Sciatic nerve (tissue), 2 donors: ENCODE measurements at regions of chr17 and their contacts with region 1.

Region 1: DNA sequence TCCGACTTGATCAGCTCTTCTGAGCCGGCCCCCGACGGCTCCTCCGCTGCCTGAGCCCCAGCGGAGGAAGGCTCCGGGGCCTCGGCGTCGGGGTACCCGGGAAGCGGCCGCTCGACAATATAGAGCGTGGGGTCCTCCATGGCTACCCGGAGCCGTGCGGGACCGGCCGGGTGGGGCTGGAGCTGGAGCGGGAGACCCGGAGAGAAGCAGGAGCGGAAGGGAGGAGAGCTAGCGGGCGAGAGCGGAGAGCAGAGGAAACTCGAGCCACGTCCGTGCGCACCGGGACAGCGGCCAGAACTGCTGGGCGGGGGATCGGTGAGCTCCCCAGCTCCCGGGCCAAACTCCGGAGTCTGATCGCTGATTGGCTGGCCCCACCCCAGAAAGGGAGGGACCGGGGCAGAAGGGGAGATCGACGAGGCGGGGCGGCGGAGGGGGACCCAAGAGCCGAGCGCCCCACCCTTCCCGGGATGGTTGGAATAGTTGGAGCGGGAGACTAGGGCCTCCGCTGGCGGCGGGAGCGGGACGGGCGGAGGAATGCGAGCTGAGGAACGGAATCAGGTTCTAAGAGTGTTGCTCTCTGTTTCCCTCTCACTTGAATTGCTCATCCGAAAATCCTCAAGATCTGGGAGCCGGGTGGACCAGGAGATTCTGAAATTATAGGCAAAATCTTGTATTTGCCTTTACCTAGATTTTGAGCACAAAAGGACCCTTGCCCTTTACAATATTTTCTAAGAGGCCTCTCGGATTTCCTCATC is at the start of gene CAVIN1:
- DNase-seq: peak; percentile 100
- ATAC-seq: peak; percentile 97
- total RNA-seq, gene CAVIN1: 608 TPM

Region 2: DNA sequence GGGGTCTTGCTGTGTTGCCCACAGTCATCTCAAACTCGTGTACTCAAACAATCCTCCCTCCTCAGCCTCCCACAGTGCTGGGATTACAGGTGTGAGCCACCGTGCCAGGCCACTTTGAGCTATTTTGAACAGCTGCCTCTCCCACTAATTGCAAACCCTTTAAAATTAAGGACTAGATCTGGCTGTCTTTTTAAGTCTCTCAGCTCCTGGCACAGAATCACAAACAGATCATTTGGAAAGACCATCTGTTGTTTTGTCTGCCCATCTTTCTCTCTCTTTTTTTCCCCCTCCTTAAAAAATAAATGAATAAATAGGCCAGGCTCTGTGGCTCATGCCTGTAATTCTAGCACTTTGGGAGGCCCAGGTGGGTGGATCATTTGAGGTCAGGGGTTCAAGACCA is 24.0 kb before region 1 on chr17:
- intact Hi-C with region 1: no loop called
- DNase-seq: no peak
- ATAC-seq: no peak

Region 3: GRCh38 chr17:42459256-42459800 is 36.2 kb after region 1 on chr17:
- intact Hi-C with region 1: loop called (anchors 5 kb)
- DNase-seq: peak; percentile 72
- ATAC-seq: peak; percentile 59

Region 4: DNA sequence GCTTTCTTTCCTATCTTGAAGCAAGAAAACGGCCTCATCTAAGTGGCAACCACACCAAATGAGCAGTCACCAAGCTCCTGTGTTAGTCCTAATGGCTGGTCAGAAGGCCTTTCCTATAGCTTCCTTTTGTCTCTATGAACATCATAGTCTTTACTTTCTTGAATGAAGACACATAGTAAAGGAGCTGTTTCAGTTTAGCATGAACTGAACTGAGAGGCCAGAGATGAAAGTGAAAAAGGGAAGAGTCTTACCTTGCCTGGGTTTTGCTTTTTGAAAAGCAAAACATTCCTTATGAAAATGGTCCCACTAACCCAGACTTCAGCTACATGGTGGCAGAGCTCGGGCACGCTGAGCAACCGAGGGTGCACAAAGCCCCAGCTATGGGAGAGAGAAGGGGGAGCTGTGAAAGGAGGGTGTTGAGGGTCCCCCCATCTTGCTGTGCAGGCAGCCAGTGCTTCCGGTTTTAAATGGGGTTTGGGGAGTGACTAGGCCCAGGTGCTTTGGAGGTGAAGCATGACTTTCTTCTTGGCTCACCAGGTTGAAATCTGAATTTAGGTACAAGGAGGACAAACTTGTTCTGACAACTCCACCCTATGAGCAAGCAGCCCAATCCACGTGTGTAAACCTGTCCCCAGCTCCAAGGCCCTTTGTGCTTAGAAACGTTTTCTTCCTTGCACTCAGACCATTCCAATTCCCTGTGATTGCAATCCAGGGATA is 163.5 kb after region 1 on chr17:
- intact Hi-C with region 1: no loop called
- DNase-seq: no peak
- ATAC-seq: no peak